T-cell (primary cell): ENCODE measurements at regions of chr17 and their contacts with region 1.

Region 1: DNA sequence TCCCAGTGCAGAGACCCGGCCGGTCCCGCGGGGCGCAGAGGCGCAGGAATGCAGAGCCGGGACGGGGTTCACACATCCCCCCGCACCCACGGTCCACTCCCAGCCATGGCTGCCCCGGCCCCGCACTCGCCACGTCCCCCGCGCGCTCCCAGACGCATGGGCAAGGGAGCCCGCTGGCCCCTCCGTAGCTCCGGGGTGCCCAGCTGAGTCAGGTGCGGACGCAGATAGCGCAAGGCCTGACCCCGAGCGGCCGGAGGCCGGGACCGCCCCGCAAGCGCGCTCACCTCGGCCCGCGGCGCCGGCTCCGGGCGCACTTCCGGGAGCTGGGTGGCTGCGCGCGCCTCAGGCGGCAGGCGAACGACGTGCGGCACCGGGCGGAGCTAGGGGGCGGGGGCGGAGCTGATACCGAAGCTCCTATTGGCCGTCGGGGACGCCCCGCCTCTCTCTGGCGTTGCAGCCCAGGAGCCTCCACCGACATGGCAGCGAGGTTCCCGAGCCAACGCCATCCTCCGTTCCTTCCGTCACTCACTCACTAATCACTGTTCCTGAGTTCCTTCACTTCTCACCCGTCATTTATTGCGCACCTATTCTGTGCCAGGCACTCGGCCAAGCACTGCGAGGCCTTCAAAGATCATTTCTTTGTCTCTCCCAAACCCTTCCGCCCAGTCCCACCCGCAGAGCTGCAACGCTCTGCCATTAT is at the start of gene ZNF18:
- DNase-seq: peak; percentile 85 to 98 (median 95)
- ATAC-seq: peak; percentile 98 to 100 (median 99)
- H3K4me3 ChIP-seq: peak within 1 kb of the TSS; percentile 65 to 74
- H3K4me3 Mint-ChIP-seq: peak within 1 kb of the TSS; percentile 90 to 96 (median 93)
- H3K27ac ChIP-seq: peak within 1 kb of the TSS; percentile 65
- H3K27ac Mint-ChIP-seq: peak within 1 kb of the TSS; percentile 93 to 94
- H3K4me1 ChIP-seq: peaks cover 3 to 11% of the 10 kb centered on the region in 2 experiments
- H3K4me1 Mint-ChIP-seq: peaks cover 23 to 27% (median 26%) of the 10 kb centered on the region in 3 donors
- H3K27me3 ChIP-seq: no peaks in the 10 kb centered on the region
- H3K27me3 Mint-ChIP-seq: no peaks in the 10 kb centered on the region
- total RNA-seq, gene ZNF18: 12.8 to 14.7 (median 13.8) TPM

Region 2: GRCh38 chr17:12007466-12007865 is 10.2 kb after region 1 on chr17:
- CTCF ChIA-PET with region 1: interaction called, 4 to 13 read pairs
- POLR2A ChIA-PET with region 1: interaction called in 1 of 2 experiments, 3 read pairs
- DNase-seq: no peak
- ATAC-seq: no peak
- H3K4me3 ChIP-seq: no peak overlapping the region
- H3K4me3 Mint-ChIP-seq: no peak overlapping the region
- H3K27ac ChIP-seq: no peak overlapping the region
- H3K27ac Mint-ChIP-seq: no peak overlapping the region
- H3K4me1 ChIP-seq: no peaks in the 10 kb centered on the region
- H3K4me1 Mint-ChIP-seq: no peaks in the 10 kb centered on the region
- H3K27me3 ChIP-seq: no peaks in the 10 kb centered on the region
- H3K27me3 Mint-ChIP-seq: peaks cover 3 to 7% of the 10 kb centered on the region in 2 donors

Region 3: GRCh38 chr17:12020642-12021622 is 23.6 kb after region 1 on chr17 and contains the start of gene MAP2K4:
- CTCF ChIA-PET with region 1: interaction called, 3 to 32 read pairs
- POLR2A ChIA-PET with region 1: interaction called, 17 to 85 read pairs
- DNase-seq: peak; percentile 80 to 98 (median 91)
- ATAC-seq: peak; percentile 93 to 96 (median 95)
- H3K4me3 ChIP-seq: peak within 1 kb of the TSS; percentile 44 to 72
- H3K4me3 Mint-ChIP-seq: peak within 1 kb of the TSS; percentile 74 to 78 (median 78)
- H3K27ac ChIP-seq: peak within 1 kb of the TSS; percentile 47
- H3K27ac Mint-ChIP-seq: peak within 1 kb of the TSS; percentile 72 to 75
- H3K4me1 ChIP-seq: peaks cover 10 to 16% of the 10 kb centered on the region in 2 experiments
- H3K4me1 Mint-ChIP-seq: peaks cover 34 to 52% (median 50%) of the 10 kb centered on the region in 3 donors
- H3K27me3 ChIP-seq: no peaks in the 10 kb centered on the region
- H3K27me3 Mint-ChIP-seq: no peaks in the 10 kb centered on the region
- total RNA-seq, gene MAP2K4: 29.4 to 34.6 (median 33.6) TPM